ENCODE measurements at regions of chr17 and their contacts with region 1.

Region 1: GRCh38 chr17:43760254-43760852 is 1.8 kb upstream of the SOST start:
- DNase-seq: peak; percentile 53
- ATAC-seq: peak; percentile 96
- H3K4me3 ChIP-seq: no peak overlapping the region
- H3K27ac ChIP-seq: no peak overlapping the region
- H3K4me1 ChIP-seq: no peaks in the 10 kb centered on the region
- H3K27me3 ChIP-seq: peaks cover 5 to 6% of the 10 kb centered on the region in 2 experiments
- CTCF ChIP-seq: peak; percentile 95 to 100 (median 100); a peak in 5 of 6 replicates
- EP300 ChIP-seq: no peak
- POLR2A ChIP-seq: no peak
- RAD21 ChIP-seq: peak; percentile 96

Region 2: GRCh38 chr17:43706235-43706634 is 54.1 kb before region 1 on chr17:
- CTCF ChIA-PET with region 1: interaction called, 515 read pairs
- POLR2A ChIA-PET with region 1: no interaction called
- RAD21 ChIA-PET with region 1: interaction called, 171 read pairs
- SMC1A ChIA-PET with region 1: interaction called, 171 read pairs
- in situ Hi-C with region 1: no loop called
- intact Hi-C with region 1: no loop called
- DNase-seq: no peak
- ATAC-seq: no peak
- H3K4me3 ChIP-seq: no peak overlapping the region
- H3K27ac ChIP-seq: no peak overlapping the region
- H3K4me1 ChIP-seq: peaks cover 4% of the 10 kb centered on the region
- H3K27me3 ChIP-seq: no peaks in the 10 kb centered on the region
- CTCF ChIP-seq: no peak
- EP300 ChIP-seq: no peak
- POLR2A ChIP-seq: no peak
- RAD21 ChIP-seq: no peak

Region 3: GRCh38 chr17:43745541-43745940 is 14.8 kb before region 1 on chr17:
- CTCF ChIA-PET with region 1: interaction called, 10 read pairs
- POLR2A ChIA-PET with region 1: interaction called, 4 read pairs
- RAD21 ChIA-PET with region 1: interaction called, 6 read pairs
- SMC1A ChIA-PET with region 1: no interaction called
- in situ Hi-C with region 1: no loop called
- intact Hi-C with region 1: no loop called
- DNase-seq: no peak
- ATAC-seq: no peak
- H3K4me3 ChIP-seq: no peak overlapping the region
- H3K27ac ChIP-seq: no peak overlapping the region
- H3K4me1 ChIP-seq: no peaks in the 10 kb centered on the region
- H3K27me3 ChIP-seq: peaks cover 3 to 5% of the 10 kb centered on the region in 2 experiments
- CTCF ChIP-seq: no peak
- EP300 ChIP-seq: no peak
- POLR2A ChIP-seq: no peak
- RAD21 ChIP-seq: no peak

Measured in GM12878 (cell line).